CD4-positive, alpha-beta T cell (primary cell): ENCODE measurements at regions of chr15 and their contacts with region 1.

Region 1: GRCh38 chr15:36501063-36501678 is 78.3 kb upstream of the CDIN1 start:
- DNase-seq: peak in 3 of 14 experiments; percentile 21 to 31 (median 28)
- ATAC-seq: no peak
- H3K4me3 ChIP-seq: no peak overlapping the region
- H3K4me3 Mint-ChIP-seq: no peak overlapping the region
- H3K27ac ChIP-seq: no peak overlapping the region
- H3K27ac Mint-ChIP-seq: no peak overlapping the region
- H3K4me1 ChIP-seq: no peaks in the 10 kb centered on the region
- H3K4me1 Mint-ChIP-seq: no peaks in the 10 kb centered on the region
- H3K27me3 ChIP-seq: peaks cover 0 to 10% of the 10 kb centered on the region in 2 experiments
- H3K27me3 Mint-ChIP-seq: peaks cover 34% of the 10 kb centered on the region
- CTCF ChIP-seq: peak; percentile 42

Region 2: GRCh38 chr15:36232491-36232890 is 268.7 kb before region 1 on chr15:
- CTCF ChIA-PET with region 1: no interaction called
- POLR2A ChIA-PET with region 1: no interaction called
- intact Hi-C with region 1: no loop called
- DNase-seq: no peak
- ATAC-seq: no peak
- H3K4me3 ChIP-seq: no peak overlapping the region
- H3K4me3 Mint-ChIP-seq: no peak overlapping the region
- H3K27ac ChIP-seq: no peak overlapping the region
- H3K27ac Mint-ChIP-seq: no peak overlapping the region
- H3K4me1 ChIP-seq: no peaks in the 10 kb centered on the region
- H3K4me1 Mint-ChIP-seq: no peaks in the 10 kb centered on the region
- H3K27me3 ChIP-seq: no peaks in the 10 kb centered on the region
- H3K27me3 Mint-ChIP-seq: no peaks in the 10 kb centered on the region
- CTCF ChIP-seq: no peak

Region 3: GRCh38 chr15:36407647-36408046 is 93.5 kb before region 1 on chr15:
- CTCF ChIA-PET with region 1: no interaction called
- POLR2A ChIA-PET with region 1: no interaction called
- intact Hi-C with region 1: no loop called
- DNase-seq: no peak
- ATAC-seq: no peak
- H3K4me3 ChIP-seq: no peak overlapping the region
- H3K4me3 Mint-ChIP-seq: no peak overlapping the region
- H3K27ac ChIP-seq: no peak overlapping the region
- H3K27ac Mint-ChIP-seq: no peak overlapping the region
- H3K4me1 ChIP-seq: no peaks in the 10 kb centered on the region
- H3K4me1 Mint-ChIP-seq: no peaks in the 10 kb centered on the region
- H3K27me3 ChIP-seq: no peaks in the 10 kb centered on the region
- H3K27me3 Mint-ChIP-seq: no peaks in the 10 kb centered on the region
- CTCF ChIP-seq: no peak

Region 4: DNA sequence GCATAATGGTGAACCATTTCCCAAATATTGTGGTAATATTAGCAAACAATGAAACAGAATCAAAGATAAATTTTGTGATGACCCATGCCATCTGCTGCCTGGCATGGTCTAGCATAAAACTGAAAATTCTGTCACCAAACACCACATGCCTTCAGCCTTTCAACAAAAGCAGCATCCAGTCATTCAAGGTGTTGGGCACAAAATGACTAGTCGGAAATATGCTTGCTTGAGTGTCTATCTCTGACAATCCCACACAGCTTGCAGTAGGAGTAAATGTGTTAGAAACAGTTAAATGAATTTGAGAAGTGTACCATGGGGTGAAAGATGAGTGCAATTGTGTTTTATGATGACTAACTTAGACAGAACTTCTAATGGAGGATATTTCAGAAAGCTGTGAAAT is 16.6 kb after region 1 on chr15:
- CTCF ChIA-PET with region 1: no interaction called
- POLR2A ChIA-PET with region 1: no interaction called
- intact Hi-C with region 1: no loop called
- DNase-seq: no peak
- ATAC-seq: no peak
- H3K4me3 ChIP-seq: no peak overlapping the region
- H3K4me3 Mint-ChIP-seq: no peak overlapping the region
- H3K27ac ChIP-seq: no peak overlapping the region
- H3K27ac Mint-ChIP-seq: no peak overlapping the region
- H3K4me1 ChIP-seq: no peaks in the 10 kb centered on the region
- H3K4me1 Mint-ChIP-seq: no peaks in the 10 kb centered on the region
- H3K27me3 ChIP-seq: no peaks in the 10 kb centered on the region
- H3K27me3 Mint-ChIP-seq: peaks cover 18% of the 10 kb centered on the region
- CTCF ChIP-seq: no peak

Region 5: DNA sequence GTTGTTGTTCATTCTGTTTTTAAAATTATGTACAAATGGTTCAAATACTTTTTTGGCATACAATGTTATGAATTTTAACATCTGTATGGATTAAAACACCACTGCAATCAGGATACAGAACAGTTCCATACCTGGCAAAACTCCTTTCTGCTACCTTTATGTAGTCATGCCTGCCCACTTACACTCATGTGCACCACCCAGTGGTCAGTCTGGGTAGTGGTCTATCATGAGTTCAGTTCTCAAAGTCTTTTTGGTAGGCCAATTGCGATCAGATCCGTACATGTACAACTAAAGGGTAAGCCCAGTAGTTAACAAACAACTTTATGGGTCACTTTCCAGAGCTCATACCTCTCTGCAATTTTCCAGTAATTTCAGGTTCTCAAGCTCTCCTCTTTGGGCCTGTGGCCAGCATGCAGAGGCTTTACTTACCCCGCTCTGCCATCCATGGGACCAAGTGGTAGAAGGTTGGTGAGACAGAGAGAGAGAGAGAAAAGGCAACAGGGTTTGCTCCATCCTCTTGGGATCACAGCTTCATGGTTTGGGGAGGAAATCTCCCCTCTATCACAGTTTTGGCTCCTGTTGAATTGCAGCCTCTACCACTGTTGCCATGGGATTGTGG is 1888.9 kb after region 1 on chr15:
- CTCF ChIA-PET with region 1: no interaction called
- POLR2A ChIA-PET with region 1: no interaction called
- intact Hi-C with region 1: loop called in 1 of 2 experiments (anchors 10 kb)
- DNase-seq: peak; percentile 31 to 65 (median 44)
- ATAC-seq: peak; percentile 54
- H3K4me3 ChIP-seq: no peak overlapping the region
- H3K4me3 Mint-ChIP-seq: no peak overlapping the region
- H3K27ac ChIP-seq: no peak overlapping the region
- H3K27ac Mint-ChIP-seq: no peak overlapping the region
- H3K4me1 ChIP-seq: no peaks in the 10 kb centered on the region
- H3K4me1 Mint-ChIP-seq: no peaks in the 10 kb centered on the region
- H3K27me3 ChIP-seq: peaks cover 0 to 12% of the 10 kb centered on the region in 2 experiments
- H3K27me3 Mint-ChIP-seq: peaks cover 26% of the 10 kb centered on the region
- CTCF ChIP-seq: peak; percentile 82